Left lung (tissue), 14 donors: ENCODE measurements at regions of chrX and their contacts with region 1.

Region 1: DNA sequence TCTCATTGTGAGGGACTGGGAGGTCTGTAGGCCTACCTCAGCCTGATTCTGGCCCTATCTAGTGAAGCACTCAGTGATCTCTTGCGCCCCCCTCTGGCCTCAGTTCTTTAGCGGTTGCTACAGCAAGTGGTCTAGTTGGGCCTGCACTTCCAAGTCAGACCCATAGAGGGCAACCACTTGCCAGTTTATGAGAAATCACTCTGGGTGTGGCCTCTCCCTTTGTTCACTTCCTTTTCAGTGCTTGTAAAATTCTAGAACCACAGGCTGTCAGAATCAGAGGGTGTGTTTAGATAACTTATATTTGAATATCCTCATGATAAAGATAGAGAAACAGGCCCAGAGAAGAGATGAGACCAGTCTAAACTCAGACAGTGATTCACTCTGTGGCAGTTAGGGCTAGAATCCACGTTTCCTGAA is 60.9 kb upstream of the LAS1L start:
- DNase-seq: peak; percentile 80 to 95 (median 87)
- ATAC-seq: peak; percentile 99
- H3K4me3 ChIP-seq: no peak overlapping the region
- H3K27ac ChIP-seq: peak overlapping the region; percentile 83
- H3K4me1 ChIP-seq: peaks cover 12 to 41% of the 10 kb centered on the region in 2 donors
- H3K27me3 ChIP-seq: no peaks in the 10 kb centered on the region
- CTCF ChIP-seq: peak; percentile 91 to 99

Region 2: GRCh38 chrX:65723706-65724105 is 128.2 kb after region 1 on chrX:
- intact Hi-C with region 1: loop called in 1 of 2 experiments (anchors 10 kb)
- DNase-seq: no peak
- ATAC-seq: no peak
- H3K4me3 ChIP-seq: no peak overlapping the region
- H3K27ac ChIP-seq: peak overlapping the region in 1 of 2 donors; percentile 23
- H3K4me1 ChIP-seq: peaks cover 0 to 56% of the 10 kb centered on the region in 2 donors
- H3K27me3 ChIP-seq: no peaks in the 10 kb centered on the region
- CTCF ChIP-seq: no peak

Region 3: GRCh38 chrX:65821721-65822496 is 226.4 kb after region 1 on chrX:
- intact Hi-C with region 1: no loop called
- DNase-seq: peak in 3 of 4 donors; percentile 20 to 86 (median 45)
- ATAC-seq: peak; percentile 88
- H3K4me3 ChIP-seq: peak overlapping the region; percentile 7 to 33
- H3K27ac ChIP-seq: no peak overlapping the region
- H3K4me1 ChIP-seq: no peaks in the 10 kb centered on the region
- H3K27me3 ChIP-seq: peaks cover 0 to 11% of the 10 kb centered on the region in 2 donors
- CTCF ChIP-seq: no peak

Region 4: GRCh38 chrX:66046612-66047235 is 451.3 kb after region 1 on chrX:
- intact Hi-C with region 1: no loop called
- DNase-seq: no peak
- ATAC-seq: peak; percentile 40
- H3K4me3 ChIP-seq: no peak overlapping the region
- H3K27ac ChIP-seq: peak overlapping the region in 1 of 2 donors; percentile 53
- H3K4me1 ChIP-seq: no peaks in the 10 kb centered on the region
- H3K27me3 ChIP-seq: no peaks in the 10 kb centered on the region
- CTCF ChIP-seq: no peak